Mucosa of descending colon (tissue), 3 donors: ENCODE measurements at regions of chr1 and their contacts with region 1.

Region 1: DNA sequence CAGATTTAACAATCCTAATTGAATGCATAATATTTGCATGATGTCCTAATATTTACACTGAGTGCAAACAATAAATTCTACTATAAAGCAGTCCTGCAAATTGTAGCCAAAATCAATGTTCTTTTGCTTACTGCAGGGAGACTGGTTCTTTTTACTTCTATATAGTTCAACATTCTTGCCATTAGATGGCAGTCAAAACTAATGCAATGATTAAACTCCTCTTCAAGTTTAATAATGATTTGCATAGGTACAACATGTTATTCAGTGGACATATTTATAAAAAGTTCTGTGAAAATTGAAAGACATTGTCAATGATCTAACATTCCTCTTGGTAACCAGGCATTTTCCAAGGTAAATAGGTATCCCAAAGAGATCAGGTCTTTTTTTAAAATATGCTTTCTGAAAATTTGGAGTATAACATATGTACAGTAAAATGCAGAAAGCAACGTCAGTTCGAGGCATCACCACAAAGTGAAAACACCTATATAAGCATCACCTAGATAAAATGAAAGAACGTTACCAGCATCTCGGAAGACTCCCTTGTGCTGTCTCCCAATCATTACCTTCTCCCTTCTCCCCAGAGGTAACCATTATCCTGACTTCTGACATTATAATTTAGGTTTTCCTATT is 9.8 kb upstream of the FNBP1L start:
- DNase-seq: no peak
- ATAC-seq: peak; percentile 41
- H3K4me3 ChIP-seq: no peak overlapping the region
- H3K4me1 ChIP-seq: peaks cover 5% of the 10 kb centered on the region
- CTCF ChIP-seq: no peak

Region 2: GRCh38 chr1:93304716-93305138 is 133.4 kb before region 1 on chr1:
- intact Hi-C with region 1: loop called in 1 of 2 experiments (anchors 10 kb)
- DNase-seq: peak in 1 of 3 donors; percentile 73
- ATAC-seq: peak; percentile 79
- H3K4me3 ChIP-seq: no peak overlapping the region
- H3K4me1 ChIP-seq: no peaks in the 10 kb centered on the region
- CTCF ChIP-seq: peak; percentile 80

Region 3: GRCh38 chr1:93846211-93846991 is 408.3 kb after region 1 on chr1:
- intact Hi-C with region 1: loop called in 1 of 2 experiments (anchors 10 kb)
- DNase-seq: peak; percentile 92 to 94 (median 92)
- ATAC-seq: peak; percentile 75
- H3K4me3 ChIP-seq: peak overlapping the region; percentile 75
- H3K4me1 ChIP-seq: peaks cover 16% of the 10 kb centered on the region
- CTCF ChIP-seq: peak; percentile 12